ENCODE measurements at regions of chr6 and their contacts with region 1.

Region 1: GRCh38 chr6:52297433-52297832 is 12.9 kb upstream of the MCM3 start:
- DNase-seq: no peak
- ATAC-seq: no peak
- H3K4me3 ChIP-seq: no peak overlapping the region
- H3K27ac ChIP-seq: no peak overlapping the region
- H3K4me1 ChIP-seq: peaks cover 7 to 8% (median 7%) of the 10 kb centered on the region in 3 donors
- H3K27me3 ChIP-seq: no peaks in the 10 kb centered on the region
- CTCF ChIP-seq: no peak

Region 2: DNA sequence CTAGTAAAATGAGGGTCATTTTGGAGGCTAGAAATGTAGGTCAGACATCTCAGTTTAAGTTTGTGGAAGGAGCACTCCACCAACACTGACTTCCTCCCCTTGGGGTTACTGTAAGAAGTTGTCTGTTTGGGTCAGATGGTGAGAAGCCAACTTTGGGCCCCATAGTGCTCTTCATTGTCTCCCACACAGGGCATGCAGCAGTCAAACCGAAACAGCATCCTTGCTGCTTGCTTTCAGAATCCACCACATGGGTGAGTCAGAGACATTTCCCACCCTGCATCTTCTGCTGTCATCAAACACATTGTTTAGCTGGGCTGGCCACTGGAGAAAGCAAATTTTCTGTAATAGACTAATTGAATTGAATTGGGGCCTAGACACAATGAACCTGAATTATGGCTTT is 69.9 kb before region 1 on chr6:
- intact Hi-C with region 1: no loop called
- DNase-seq: no peak
- ATAC-seq: no peak
- H3K4me3 ChIP-seq: no peak overlapping the region
- H3K27ac ChIP-seq: no peak overlapping the region
- H3K4me1 ChIP-seq: no peaks in the 10 kb centered on the region
- H3K27me3 ChIP-seq: no peaks in the 10 kb centered on the region
- CTCF ChIP-seq: no peak

Region 3: GRCh38 chr6:52389626-52390360 is 92.4 kb after region 1 on chr6:
- intact Hi-C with region 1: loop called in 1 of 3 experiments (anchors 10 kb)
- DNase-seq: peak; percentile 72 to 89 (median 78)
- ATAC-seq: peak; percentile 89 to 94 (median 91)
- H3K4me3 ChIP-seq: no peak overlapping the region
- H3K27ac ChIP-seq: peak overlapping the region in 3 of 4 donors; percentile 43 to 78 (median 61)
- H3K4me1 ChIP-seq: peaks cover 9 to 23% (median 21%) of the 10 kb centered on the region in 3 donors
- H3K27me3 ChIP-seq: no peaks in the 10 kb centered on the region
- CTCF ChIP-seq: peak in 1 of 4 donors; percentile 8

Region 4: DNA sequence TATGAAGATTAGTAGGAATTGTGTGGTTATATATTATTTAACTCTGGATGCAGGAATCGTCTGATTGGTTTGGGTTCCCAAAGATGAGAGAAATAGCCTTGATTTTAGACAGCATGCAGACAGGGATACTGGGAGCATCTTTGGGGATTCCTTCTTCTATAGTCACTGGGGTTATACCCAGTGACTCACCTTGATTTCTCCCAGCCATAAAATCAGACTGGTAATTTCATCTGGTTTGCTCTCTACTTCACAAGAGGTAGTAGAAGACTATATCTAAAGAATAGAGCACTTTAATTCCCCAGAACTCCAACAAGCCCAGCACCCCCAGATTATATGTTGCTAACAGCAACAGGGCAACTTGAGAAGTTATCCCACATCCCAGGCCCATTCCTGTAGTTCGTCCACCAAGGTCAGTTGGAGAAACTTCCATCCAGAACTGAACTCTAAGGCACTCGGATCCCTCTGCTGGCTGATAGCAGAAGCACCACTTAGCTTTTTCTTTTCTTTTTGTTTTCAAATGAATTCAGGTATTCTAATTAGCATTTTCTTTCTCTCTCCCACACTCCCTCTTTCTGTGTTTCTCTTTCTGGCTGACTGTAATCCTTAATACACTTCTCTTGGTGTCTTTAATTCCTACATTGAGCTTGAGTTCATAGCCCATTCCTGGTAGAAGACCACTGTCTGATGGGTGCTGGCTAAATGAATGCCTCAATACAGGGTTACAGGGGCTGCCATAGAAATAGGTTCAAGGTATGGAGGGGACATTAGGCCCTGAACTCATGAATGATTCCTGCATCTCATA is 102.3 kb after region 1 on chr6:
- intact Hi-C with region 1: loop called in 1 of 3 experiments (anchors 10 kb)
- DNase-seq: peak in 1 of 6 donors; percentile 42
- ATAC-seq: peak; percentile 50 to 97 (median 88)
- H3K4me3 ChIP-seq: no peak overlapping the region
- H3K27ac ChIP-seq: no peak overlapping the region
- H3K4me1 ChIP-seq: no peaks in the 10 kb centered on the region
- H3K27me3 ChIP-seq: no peaks in the 10 kb centered on the region
- CTCF ChIP-seq: peak; percentile 37 to 72 (median 62)

Region 5: GRCh38 chr6:52849137-52849536 is 551.7 kb after region 1 on chr6:
- intact Hi-C with region 1: no loop called
- DNase-seq: no peak
- ATAC-seq: no peak
- H3K4me3 ChIP-seq: no peak overlapping the region
- H3K27ac ChIP-seq: no peak overlapping the region
- H3K4me1 ChIP-seq: peaks cover 0 to 3% (median 0%) of the 10 kb centered on the region in 3 donors
- H3K27me3 ChIP-seq: no peaks in the 10 kb centered on the region
- CTCF ChIP-seq: no peak